Common myeloid progenitor, CD34-positive (primary cell): ENCODE measurements at regions of chr10 and their contacts with region 1.

Region 1: GRCh38 chr10:61750929-61751471 is 88.3 kb downstream of the CABCOCO1 start:
- DNase-seq: peak; percentile 85 to 90 (median 88)
- H3K4me3 ChIP-seq: peak overlapping the region in 3 of 7 experiments; percentile 7 to 22 (median 14)
- H3K27ac ChIP-seq: peak overlapping the region; percentile 62 to 69
- H3K4me1 ChIP-seq: peaks cover 30 to 75% (median 45%) of the 10 kb centered on the region in 4 experiments
- H3K27me3 ChIP-seq: no peaks in the 10 kb centered on the region

Region 2: GRCh38 chr10:61621605-61622060 is 129.4 kb before region 1 on chr10:
- CTCF ChIA-PET with region 1: no interaction called
- POLR2A ChIA-PET with region 1: no interaction called
- DNase-seq: peak in 2 of 3 donors; percentile 12 to 23
- H3K4me3 ChIP-seq: peak overlapping the region in 2 of 7 experiments; percentile 27 to 30
- H3K27ac ChIP-seq: no peak overlapping the region
- H3K4me1 ChIP-seq: peaks cover 0 to 8% (median 3%) of the 10 kb centered on the region in 4 experiments
- H3K27me3 ChIP-seq: no peaks in the 10 kb centered on the region

Region 3: DNA sequence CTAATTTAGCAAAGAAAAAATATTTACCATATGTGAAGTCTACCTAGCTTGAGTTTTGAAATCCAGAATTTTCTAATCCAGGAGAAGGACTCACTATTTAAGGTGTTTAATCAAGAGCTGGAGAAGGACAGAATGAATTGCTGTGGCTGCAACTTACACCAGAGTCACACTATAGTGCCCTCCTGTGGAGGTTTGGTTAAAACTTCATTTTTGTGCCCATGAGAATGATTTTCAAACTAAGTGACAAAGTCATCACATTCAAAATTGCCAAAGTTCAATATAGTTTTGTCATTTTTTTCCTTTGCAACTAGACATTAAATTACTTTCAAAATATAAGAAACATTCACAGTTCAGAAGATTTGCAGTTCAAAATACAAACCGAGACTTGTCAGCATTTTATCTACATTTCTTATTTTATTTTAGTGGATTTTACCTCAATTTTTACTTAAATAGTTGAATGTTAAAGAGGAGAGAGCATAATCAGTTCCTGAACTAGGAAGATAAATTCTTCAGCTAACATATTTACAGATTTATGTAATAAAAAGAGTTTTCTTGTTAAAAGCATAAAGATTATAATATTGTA is 17.6 kb before region 1 on chr10:
- CTCF ChIA-PET with region 1: interaction called, 108 read pairs
- POLR2A ChIA-PET with region 1: interaction called, 3 read pairs
- DNase-seq: peak; percentile 58 to 75 (median 74)
- H3K4me3 ChIP-seq: no peak overlapping the region
- H3K27ac ChIP-seq: no peak overlapping the region
- H3K4me1 ChIP-seq: peaks cover 0 to 10% (median 7%) of the 10 kb centered on the region in 4 experiments
- H3K27me3 ChIP-seq: no peaks in the 10 kb centered on the region

Region 4: DNA sequence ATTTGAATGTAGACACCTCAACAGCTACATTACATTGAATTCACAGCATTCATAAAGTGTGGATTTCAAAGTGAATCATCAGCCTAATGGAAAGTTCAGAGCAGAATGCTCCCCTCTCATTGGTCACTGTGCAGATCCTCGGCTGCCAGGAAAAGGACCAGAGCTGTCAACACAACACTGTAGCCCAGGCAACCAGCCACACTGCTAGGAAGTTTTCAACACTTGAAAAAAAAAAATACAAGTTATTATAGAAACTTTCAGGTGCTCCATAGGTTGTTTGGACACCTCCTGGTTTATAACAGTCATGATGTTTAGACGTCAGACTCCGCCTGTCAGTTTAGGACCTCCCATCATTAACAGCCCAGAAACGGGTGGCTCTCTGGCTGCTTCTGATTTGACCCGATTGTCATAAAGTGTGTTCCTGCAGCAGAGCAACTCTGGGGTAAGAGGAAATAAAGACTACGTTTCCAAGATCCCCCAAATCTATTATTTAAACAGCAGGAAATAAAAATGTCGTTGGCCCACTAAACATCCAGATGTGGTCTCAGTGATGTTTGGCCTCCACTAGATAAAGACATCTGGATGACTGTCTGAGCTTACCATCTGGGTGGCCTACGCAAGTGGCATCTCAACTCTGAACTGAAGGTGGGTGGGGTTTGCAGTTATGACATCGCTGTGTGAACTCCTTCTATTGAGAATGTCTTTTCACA is 29.1 kb after region 1 on chr10:
- CTCF ChIA-PET with region 1: interaction called, 23 read pairs
- POLR2A ChIA-PET with region 1: interaction called, 6 read pairs
- DNase-seq: peak; percentile 89 to 98 (median 96)
- H3K4me3 ChIP-seq: peak overlapping the region in 1 of 7 experiments; percentile 29
- H3K27ac ChIP-seq: peak overlapping the region; percentile 91 to 92
- H3K4me1 ChIP-seq: peaks cover 5 to 55% (median 22%) of the 10 kb centered on the region in 4 experiments
- H3K27me3 ChIP-seq: no peaks in the 10 kb centered on the region

Region 5: DNA sequence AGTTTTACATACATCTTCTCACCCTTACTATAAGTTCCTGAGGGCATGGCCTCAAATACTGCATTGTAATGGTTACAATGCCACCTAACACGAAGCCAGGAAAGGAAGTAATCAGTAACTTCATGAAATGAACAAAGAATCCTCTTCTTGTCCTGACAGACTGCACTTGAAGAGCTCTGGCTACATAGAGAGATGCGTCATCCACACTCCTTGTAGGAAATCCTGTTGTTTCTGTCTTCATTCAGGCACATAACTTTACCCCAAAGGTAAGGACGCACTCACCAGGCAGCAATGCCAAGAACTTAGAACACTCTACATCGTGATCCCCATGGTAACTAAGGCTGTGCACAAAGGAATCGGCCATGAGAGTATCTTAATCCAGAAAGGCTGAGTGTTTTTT is 70.2 kb after region 1 on chr10:
- CTCF ChIA-PET with region 1: interaction called, 32 read pairs
- POLR2A ChIA-PET with region 1: interaction called, 6 read pairs
- DNase-seq: no peak
- H3K4me3 ChIP-seq: no peak overlapping the region
- H3K27ac ChIP-seq: no peak overlapping the region
- H3K4me1 ChIP-seq: peaks cover 0 to 27% (median 11%) of the 10 kb centered on the region in 4 experiments
- H3K27me3 ChIP-seq: no peaks in the 10 kb centered on the region

Region 6: GRCh38 chr10:61866700-61867368 is 115.8 kb after region 1 on chr10:
- CTCF ChIA-PET with region 1: interaction called, 10 read pairs
- POLR2A ChIA-PET with region 1: interaction called, 7 read pairs
- DNase-seq: no peak
- H3K4me3 ChIP-seq: peak overlapping the region in 4 of 7 experiments; percentile 37 to 75 (median 64)
- H3K27ac ChIP-seq: no peak overlapping the region
- H3K4me1 ChIP-seq: peaks cover 0 to 19% (median 5%) of the 10 kb centered on the region in 4 experiments
- H3K27me3 ChIP-seq: no peaks in the 10 kb centered on the region